Naive thymus-derived CD4-positive, alpha-beta T cell (primary cell): ENCODE measurements at regions of chr13 and their contacts with region 1.

Region 1: GRCh38 chr13:40922437-40923040 is 96.6 kb downstream of the ELF1 start:
- DNase-seq: no peak
- ATAC-seq: no peak
- H3K4me3 ChIP-seq: no peak overlapping the region
- H3K4me3 Mint-ChIP-seq: peak overlapping the region in 9 of 10 donors; percentile 53 to 100 (median 72)
- H3K27ac ChIP-seq: no peak overlapping the region
- H3K27ac Mint-ChIP-seq: peak overlapping the region; percentile 54 to 96 (median 91)
- H3K4me1 ChIP-seq: peaks cover 0 to 8% of the 10 kb centered on the region in 2 donors
- H3K4me1 Mint-ChIP-seq: peaks cover 11 to 33% (median 23%) of the 10 kb centered on the region in 7 donors
- H3K27me3 ChIP-seq: no peaks in the 10 kb centered on the region
- H3K27me3 Mint-ChIP-seq: no peaks in the 10 kb centered on the region

Region 2: GRCh38 chr13:39655569-39656324 is 1266.8 kb before region 1 on chr13 and contains the start of gene COG6:
- CTCF ChIA-PET with region 1: no interaction called
- POLR2A ChIA-PET with region 1: no interaction called
- intact Hi-C with region 1: loop called in 1 of 2 experiments (anchors 1 kb)
- DNase-seq: peak; percentile 88 to 99 (median 94)
- ATAC-seq: peak; percentile 93
- H3K4me3 ChIP-seq: peak within 1 kb of the TSS; percentile 79
- H3K4me3 Mint-ChIP-seq: peak within 1 kb of the TSS; percentile 89 to 100 (median 96)
- H3K27ac ChIP-seq: peak within 1 kb of the TSS; percentile 79
- H3K27ac Mint-ChIP-seq: peak within 1 kb of the TSS; percentile 79 to 97 (median 90)
- H3K4me1 ChIP-seq: peaks cover 4 to 5% of the 10 kb centered on the region in 2 donors
- H3K4me1 Mint-ChIP-seq: peaks cover 19 to 46% (median 43%) of the 10 kb centered on the region in 7 donors
- H3K27me3 ChIP-seq: no peaks in the 10 kb centered on the region
- H3K27me3 Mint-ChIP-seq: peaks cover 0 to 14% (median 4%) of the 10 kb centered on the region in 5 donors
- total RNA-seq, gene COG6: 19.4 to 41.6 (median 32.3) TPM

Region 3: DNA sequence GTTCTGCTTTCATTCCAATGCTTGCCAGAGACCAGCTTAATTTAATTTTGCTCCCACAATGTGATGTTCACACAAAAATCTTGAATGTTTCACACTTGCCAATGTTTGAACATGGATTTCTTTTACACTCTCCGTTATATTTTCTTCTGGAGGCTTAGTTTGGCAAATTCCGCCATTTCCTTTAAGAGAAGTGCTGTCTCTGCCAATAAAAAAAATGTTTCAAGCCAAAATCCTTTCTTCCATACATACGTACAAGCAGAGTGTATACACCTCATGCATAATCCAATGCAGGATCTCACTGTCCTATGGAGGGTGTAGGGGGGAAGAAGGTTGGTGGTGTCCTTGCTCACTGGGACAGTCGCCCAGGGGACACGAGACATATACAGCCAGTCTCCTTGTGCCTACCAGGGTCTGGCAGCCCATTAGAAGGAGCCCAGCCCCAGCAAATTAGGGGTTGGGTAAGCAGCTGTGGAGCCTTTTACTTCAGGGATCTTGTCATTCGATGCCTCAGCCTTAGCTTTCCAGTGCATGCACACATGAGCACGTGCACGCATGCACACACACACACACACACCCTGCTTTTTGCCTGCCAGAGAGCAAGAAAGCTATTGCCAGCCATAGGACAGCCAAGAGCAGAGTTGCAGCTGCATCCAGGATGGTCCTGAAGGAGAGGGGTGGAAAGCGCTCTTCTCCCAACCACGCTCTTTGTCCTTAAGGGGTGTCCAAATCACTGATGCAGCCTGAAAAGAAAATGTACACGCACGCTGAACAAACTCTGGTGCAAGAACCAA is 464.4 kb before region 1 on chr13:
- CTCF ChIA-PET with region 1: no interaction called
- POLR2A ChIA-PET with region 1: no interaction called
- intact Hi-C with region 1: no loop called
- DNase-seq: no peak
- ATAC-seq: no peak
- H3K4me3 ChIP-seq: no peak overlapping the region
- H3K4me3 Mint-ChIP-seq: no peak overlapping the region
- H3K27ac ChIP-seq: no peak overlapping the region
- H3K27ac Mint-ChIP-seq: peak overlapping the region in 1 of 9 donors; percentile 41
- H3K4me1 ChIP-seq: peaks cover 0 to 3% of the 10 kb centered on the region in 2 donors
- H3K4me1 Mint-ChIP-seq: peaks cover 3 to 17% (median 5%) of the 10 kb centered on the region in 7 donors
- H3K27me3 ChIP-seq: no peaks in the 10 kb centered on the region
- H3K27me3 Mint-ChIP-seq: peaks cover 0 to 3% (median 0%) of the 10 kb centered on the region in 5 donors

Region 4: GRCh38 chr13:40490086-40490758 is 432.3 kb before region 1 on chr13:
- CTCF ChIA-PET with region 1: no interaction called
- POLR2A ChIA-PET with region 1: no interaction called
- intact Hi-C with region 1: no loop called
- DNase-seq: peak in 7 of 9 donors; percentile 60 to 76 (median 70)
- ATAC-seq: no peak
- H3K4me3 ChIP-seq: peak overlapping the region; percentile 11
- H3K4me3 Mint-ChIP-seq: peak overlapping the region; percentile 56 to 85 (median 75)
- H3K27ac ChIP-seq: peak overlapping the region; percentile 57
- H3K27ac Mint-ChIP-seq: peak overlapping the region; percentile 44 to 98 (median 92)
- H3K4me1 ChIP-seq: peaks cover 47 to 80% of the 10 kb centered on the region in 2 donors
- H3K4me1 Mint-ChIP-seq: peaks cover 51 to 97% (median 87%) of the 10 kb centered on the region in 7 donors
- H3K27me3 ChIP-seq: no peaks in the 10 kb centered on the region
- H3K27me3 Mint-ChIP-seq: no peaks in the 10 kb centered on the region

Region 5: DNA sequence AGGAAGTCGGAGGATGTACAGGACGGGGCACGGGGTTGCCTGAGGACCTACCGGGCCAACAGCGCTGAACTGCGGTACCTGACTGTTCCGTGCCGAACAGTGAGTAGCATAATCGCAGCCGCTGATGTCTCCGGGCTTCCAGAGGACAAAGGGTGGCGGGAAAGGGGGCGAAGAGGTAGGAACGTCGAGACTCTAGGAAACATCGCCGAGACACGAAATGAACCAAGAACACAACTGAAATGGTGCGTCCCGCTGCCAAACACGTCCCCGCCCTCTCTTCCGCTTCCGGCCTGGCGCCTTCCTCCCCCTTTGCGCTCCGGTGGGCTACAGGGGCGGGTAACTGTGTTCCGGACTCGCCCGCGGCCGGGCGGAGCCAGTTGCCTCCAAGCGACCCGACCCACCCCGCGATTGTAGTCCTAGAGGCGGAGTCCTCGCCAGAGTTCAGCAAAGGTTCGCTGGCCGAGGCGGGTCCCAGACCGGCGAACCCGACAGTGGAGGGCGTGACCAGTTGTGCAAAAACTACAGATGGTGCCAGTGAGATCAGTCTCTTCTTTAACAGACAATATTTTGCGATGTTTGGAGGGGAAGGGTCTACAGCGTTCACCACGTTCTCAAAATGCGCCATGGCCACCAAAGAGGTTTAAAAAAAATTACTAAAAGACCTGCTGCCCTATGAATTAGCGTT is 151.5 kb before region 1 on chr13 and contains the start of gene MRPS31:
- CTCF ChIA-PET with region 1: interaction called, 3 read pairs
- POLR2A ChIA-PET with region 1: interaction called, 3 read pairs
- intact Hi-C with region 1: loop called (anchors 1 to 2 kb)
- DNase-seq: peak; percentile 89 to 97 (median 93)
- ATAC-seq: peak; percentile 99
- H3K4me3 ChIP-seq: peak within 1 kb of the TSS; percentile 78
- H3K4me3 Mint-ChIP-seq: peak within 1 kb of the TSS; percentile 94 to 100 (median 99)
- H3K27ac ChIP-seq: peak within 1 kb of the TSS; percentile 89
- H3K27ac Mint-ChIP-seq: peak within 1 kb of the TSS; percentile 93 to 100 (median 98)
- H3K4me1 ChIP-seq: peaks cover 15 to 16% of the 10 kb centered on the region in 2 donors
- H3K4me1 Mint-ChIP-seq: peaks cover 16 to 41% (median 33%) of the 10 kb centered on the region in 7 donors
- H3K27me3 ChIP-seq: no peaks in the 10 kb centered on the region
- H3K27me3 Mint-ChIP-seq: no peaks in the 10 kb centered on the region
- total RNA-seq, gene MRPS31: 15.8 to 39.9 (median 34.7) TPM

Region 6: DNA sequence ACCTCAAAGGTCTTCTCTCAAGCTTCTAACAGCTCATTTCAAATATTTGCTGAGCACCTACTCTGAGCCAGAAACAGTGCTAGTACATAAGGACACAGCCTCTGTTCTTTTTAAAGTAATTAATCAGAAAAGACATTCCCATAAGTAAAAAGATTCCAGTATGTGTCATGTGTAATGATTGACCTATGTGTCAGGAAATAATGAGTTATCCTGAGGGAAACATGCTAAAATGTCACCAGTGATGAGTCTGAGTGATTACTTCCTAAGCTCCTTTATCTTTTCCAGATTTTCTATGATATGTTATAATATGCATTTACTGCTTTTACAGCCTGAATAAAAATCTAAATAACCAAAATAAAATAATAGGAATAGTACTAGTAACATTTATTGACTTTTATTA is 25.5 kb before region 1 on chr13:
- CTCF ChIA-PET with region 1: no interaction called
- POLR2A ChIA-PET with region 1: no interaction called
- intact Hi-C with region 1: no loop called
- DNase-seq: no peak
- ATAC-seq: no peak
- H3K4me3 ChIP-seq: no peak overlapping the region
- H3K4me3 Mint-ChIP-seq: no peak overlapping the region
- H3K27ac ChIP-seq: no peak overlapping the region
- H3K27ac Mint-ChIP-seq: no peak overlapping the region
- H3K4me1 ChIP-seq: no peaks in the 10 kb centered on the region
- H3K4me1 Mint-ChIP-seq: peaks cover 0 to 19% (median 9%) of the 10 kb centered on the region in 7 donors
- H3K27me3 ChIP-seq: no peaks in the 10 kb centered on the region
- H3K27me3 Mint-ChIP-seq: no peaks in the 10 kb centered on the region

Region 7: DNA sequence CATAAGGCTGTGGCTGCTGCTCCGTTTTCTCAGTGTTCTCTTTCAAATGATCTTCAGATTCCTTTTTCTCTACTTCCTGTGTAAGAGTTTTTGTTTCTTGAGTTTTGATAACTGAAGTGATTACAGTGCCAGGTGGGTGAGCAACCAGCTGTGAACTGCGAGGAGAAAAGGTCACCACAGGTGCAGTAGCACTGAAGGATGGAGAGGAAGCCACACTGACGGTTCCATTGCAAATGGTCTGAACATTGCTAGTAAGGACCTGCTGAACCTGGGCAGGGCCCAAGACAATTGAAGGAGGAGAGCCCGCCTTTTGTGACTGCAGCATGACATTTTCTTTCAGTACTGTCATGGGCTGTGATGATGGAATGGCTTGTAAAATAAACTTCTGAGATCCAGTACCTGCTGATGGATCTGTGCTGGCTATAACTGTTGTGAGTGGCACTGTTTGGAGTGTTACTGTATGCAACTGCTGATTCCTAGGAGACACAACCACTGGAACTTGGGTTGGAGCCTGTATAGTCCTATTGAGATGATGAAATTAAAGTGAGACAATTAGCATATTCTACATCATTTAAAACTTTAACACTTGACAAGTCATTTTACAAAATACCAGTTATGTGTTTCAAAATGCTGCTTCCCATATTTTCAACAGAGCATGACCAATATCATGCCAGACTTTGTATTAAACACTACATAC is 11.1 kb after region 1 on chr13:
- CTCF ChIA-PET with region 1: no interaction called
- POLR2A ChIA-PET with region 1: interaction called, 10 read pairs
- intact Hi-C with region 1: loop called in 1 of 2 experiments (anchors 1 kb)
- DNase-seq: peak in 2 of 9 donors; percentile 5 to 13
- ATAC-seq: peak; percentile 31
- H3K4me3 ChIP-seq: no peak overlapping the region
- H3K4me3 Mint-ChIP-seq: peak overlapping the region in 8 of 10 donors; percentile 11 to 61 (median 26)
- H3K27ac ChIP-seq: peak overlapping the region; percentile 6
- H3K27ac Mint-ChIP-seq: peak overlapping the region; percentile 54 to 89 (median 75)
- H3K4me1 ChIP-seq: peaks cover 3 to 8% of the 10 kb centered on the region in 2 donors
- H3K4me1 Mint-ChIP-seq: peaks cover 12 to 59% (median 48%) of the 10 kb centered on the region in 7 donors
- H3K27me3 ChIP-seq: no peaks in the 10 kb centered on the region
- H3K27me3 Mint-ChIP-seq: no peaks in the 10 kb centered on the region

Region 8: GRCh38 chr13:41019011-41019487 is 96.5 kb after region 1 on chr13 and contains the start of gene ELF1:
- CTCF ChIA-PET with region 1: no interaction called
- POLR2A ChIA-PET with region 1: interaction called, 9 read pairs
- intact Hi-C with region 1: loop called (anchors 1 kb)
- DNase-seq: peak in 8 of 9 donors; percentile 35 to 83 (median 75)
- ATAC-seq: peak; percentile 93
- H3K4me3 ChIP-seq: peak within 1 kb of the TSS; percentile 76
- H3K4me3 Mint-ChIP-seq: peak within 1 kb of the TSS; percentile 79 to 94 (median 90)
- H3K27ac ChIP-seq: peak within 1 kb of the TSS; percentile 93
- H3K27ac Mint-ChIP-seq: peak within 1 kb of the TSS; percentile 90 to 98 (median 96)
- H3K4me1 ChIP-seq: peaks cover 14 to 22% of the 10 kb centered on the region in 2 donors
- H3K4me1 Mint-ChIP-seq: peaks cover 29 to 61% (median 50%) of the 10 kb centered on the region in 7 donors
- H3K27me3 ChIP-seq: no peaks in the 10 kb centered on the region
- H3K27me3 Mint-ChIP-seq: no peaks in the 10 kb centered on the region
- total RNA-seq, gene ELF1: 117 to 193 (median 180) TPM

Region 9: DNA sequence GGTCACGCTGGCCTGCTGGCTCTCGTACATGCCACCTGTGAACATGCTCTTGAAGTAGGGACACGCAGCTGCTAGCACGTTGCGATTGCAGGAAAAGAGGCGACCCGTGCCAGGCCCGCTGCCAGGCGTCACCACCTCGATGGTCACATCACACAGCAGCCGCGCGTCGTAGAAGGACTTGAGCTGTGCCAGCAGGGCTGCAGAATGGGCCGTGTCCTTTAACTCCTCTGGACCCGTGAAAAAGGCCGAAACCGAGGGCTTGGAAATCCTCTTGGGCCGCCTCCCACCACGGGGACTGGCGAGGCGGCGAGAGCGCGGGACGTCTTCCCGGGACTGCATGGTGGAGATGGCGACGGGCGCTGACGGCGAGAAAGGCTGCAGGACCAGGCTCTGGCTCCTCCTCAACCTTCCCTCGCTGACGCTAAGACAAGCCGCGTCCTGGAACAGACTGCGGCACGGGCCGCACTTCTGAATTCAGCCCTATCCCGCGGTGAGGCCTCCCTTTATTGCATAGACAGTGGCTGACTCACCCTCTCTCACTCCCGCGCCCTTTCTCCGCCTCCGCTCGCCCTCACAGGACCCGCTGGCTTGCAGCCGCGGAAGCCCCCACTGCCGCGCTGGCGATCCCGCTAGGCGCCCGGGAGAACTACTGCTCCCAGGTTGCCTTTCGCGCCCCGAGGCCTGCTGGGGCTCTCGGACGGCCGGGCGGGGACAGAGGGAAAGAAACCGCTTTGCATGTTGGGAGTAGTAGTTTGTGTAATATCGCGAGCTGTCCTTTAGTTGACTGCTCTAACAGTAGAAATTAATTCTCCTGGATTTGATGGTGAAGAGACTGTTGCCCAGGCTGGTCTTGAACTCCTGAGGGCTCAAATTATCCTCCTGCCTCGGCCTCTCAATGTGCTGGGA is 271.6 kb after region 1 on chr13 and contains the start of gene KBTBD7:
- CTCF ChIA-PET with region 1: no interaction called
- POLR2A ChIA-PET with region 1: no interaction called
- intact Hi-C with region 1: loop called (anchors 1 kb)
- DNase-seq: peak; percentile 78 to 94 (median 83)
- ATAC-seq: peak; percentile 98
- H3K4me3 ChIP-seq: peak within 1 kb of the TSS; percentile 85
- H3K4me3 Mint-ChIP-seq: peak within 1 kb of the TSS; percentile 87 to 98 (median 94)
- H3K27ac ChIP-seq: peak within 1 kb of the TSS; percentile 70
- H3K27ac Mint-ChIP-seq: peak within 1 kb of the TSS; percentile 79 to 94 (median 90)
- H3K4me1 ChIP-seq: peaks cover 0 to 13% of the 10 kb centered on the region in 2 donors
- H3K4me1 Mint-ChIP-seq: peaks cover 25 to 50% (median 41%) of the 10 kb centered on the region in 7 donors
- H3K27me3 ChIP-seq: no peaks in the 10 kb centered on the region
- H3K27me3 Mint-ChIP-seq: no peaks in the 10 kb centered on the region
- total RNA-seq, gene KBTBD7: 2.8 to 12.9 (median 11.5) TPM

Region 10: DNA sequence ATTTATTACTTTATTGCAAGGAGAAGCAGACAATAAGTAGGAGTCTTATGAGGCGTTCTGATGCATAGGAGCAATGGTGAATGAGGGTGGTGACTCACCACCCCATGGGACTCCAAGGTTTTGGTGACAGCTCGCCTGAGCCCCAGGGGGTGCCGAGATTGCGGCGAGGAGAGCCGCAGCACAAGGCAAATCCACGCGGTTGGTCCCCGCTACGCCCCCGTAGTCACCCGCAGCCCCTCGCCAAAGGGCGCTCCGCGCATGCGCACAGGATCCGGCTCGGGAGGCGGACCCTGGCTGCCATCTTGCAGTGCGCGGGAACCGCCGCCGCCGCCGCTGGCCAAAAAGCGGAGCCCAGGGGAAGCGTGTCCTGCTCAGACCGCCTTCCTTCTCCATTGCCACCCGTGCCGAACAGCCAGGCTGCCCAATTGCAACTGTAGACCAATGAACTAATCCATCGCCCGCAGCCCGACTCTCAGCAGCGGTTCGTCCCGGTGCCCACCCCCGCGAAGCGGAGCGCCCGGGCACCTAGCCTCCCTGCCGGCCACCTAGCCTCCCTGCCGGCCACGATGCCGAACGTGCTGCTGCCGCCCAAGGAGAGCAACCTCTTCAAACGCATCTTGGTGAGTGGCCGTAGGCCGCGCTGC is 388.5 kb after region 1 on chr13 and contains the start of gene NAA16:
- CTCF ChIA-PET with region 1: no interaction called
- POLR2A ChIA-PET with region 1: no interaction called
- intact Hi-C with region 1: loop called in 1 of 2 experiments (anchors 5 kb)
- DNase-seq: peak; percentile 91 to 99 (median 94)
- ATAC-seq: peak; percentile 91
- H3K4me3 ChIP-seq: peak within 1 kb of the TSS; percentile 97
- H3K4me3 Mint-ChIP-seq: peak within 1 kb of the TSS; percentile 80 to 99 (median 98)
- H3K27ac ChIP-seq: peak within 1 kb of the TSS; percentile 91
- H3K27ac Mint-ChIP-seq: peak within 1 kb of the TSS; percentile 76 to 96 (median 95)
- H3K4me1 ChIP-seq: peaks cover 25 to 29% of the 10 kb centered on the region in 2 donors
- H3K4me1 Mint-ChIP-seq: peaks cover 14 to 55% (median 41%) of the 10 kb centered on the region in 7 donors
- H3K27me3 ChIP-seq: no peaks in the 10 kb centered on the region
- H3K27me3 Mint-ChIP-seq: no peaks in the 10 kb centered on the region
- total RNA-seq, gene NAA16: 30.6 to 99.6 (median 90.4) TPM